Caco-2 (cell line): ENCODE measurements at regions of chr16 and their contacts with region 1.

Region 1: DNA sequence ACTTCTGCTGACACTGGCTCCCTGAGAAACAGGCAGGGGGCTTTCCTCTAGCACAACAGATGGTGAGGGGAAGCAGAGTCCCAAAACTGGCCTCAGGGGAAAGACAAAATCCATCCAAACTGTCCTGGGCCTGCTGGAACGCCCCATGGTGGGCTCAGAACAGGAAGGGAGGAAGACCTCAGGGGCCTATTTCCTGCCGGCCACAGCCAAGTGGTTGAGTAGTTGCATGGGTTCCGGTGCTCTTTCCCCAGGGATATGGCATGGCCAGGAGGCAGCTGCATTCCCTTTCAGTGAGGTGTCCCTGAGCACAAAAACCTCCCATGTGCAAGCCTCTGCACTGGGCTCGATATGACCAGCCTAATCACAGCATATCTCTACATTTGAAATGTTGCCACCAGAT is 303.0 kb upstream of the IRX5 start:
- DNase-seq: no peak
- H3K4me3 ChIP-seq: no peak overlapping the region
- H3K4me3 Mint-ChIP-seq: peak overlapping the region; percentile 13
- H3K27ac Mint-ChIP-seq: peak overlapping the region; percentile 75
- H3K4me1 ChIP-seq: peaks cover 33% of the 10 kb centered on the region
- H3K4me1 Mint-ChIP-seq: peaks cover 42% of the 10 kb centered on the region
- H3K27me3 ChIP-seq: no peaks in the 10 kb centered on the region
- H3K27me3 Mint-ChIP-seq: no peaks in the 10 kb centered on the region
- CTCF ChIP-seq: no peak

Region 2: GRCh38 chr16:53945996-53946395 is 681.6 kb before region 1 on chr16:
- CTCF ChIA-PET with region 1: no interaction called
- POLR2A ChIA-PET with region 1: interaction called, 3 read pairs
- intact Hi-C with region 1: loop called (anchors 5 kb)
- DNase-seq: peak in 1 of 2 experiments; percentile 65
- H3K4me3 ChIP-seq: no peak overlapping the region
- H3K4me3 Mint-ChIP-seq: no peak overlapping the region
- H3K27ac Mint-ChIP-seq: no peak overlapping the region
- H3K4me1 ChIP-seq: peaks cover 14% of the 10 kb centered on the region
- H3K4me1 Mint-ChIP-seq: peaks cover 7% of the 10 kb centered on the region
- H3K27me3 ChIP-seq: no peaks in the 10 kb centered on the region
- H3K27me3 Mint-ChIP-seq: no peaks in the 10 kb centered on the region
- CTCF ChIP-seq: peak; percentile 69 to 87

Region 3: GRCh38 chr16:54286090-54286993 is 341.3 kb before region 1 on chr16 and contains the start of gene IRX3:
- CTCF ChIA-PET with region 1: no interaction called
- POLR2A ChIA-PET with region 1: no interaction called
- intact Hi-C with region 1: loop called (anchors 5 kb)
- DNase-seq: peak; percentile 90 to 95
- H3K4me3 ChIP-seq: peak within 1 kb of the TSS; percentile 83
- H3K4me3 Mint-ChIP-seq: peak within 1 kb of the TSS; percentile 85
- H3K27ac Mint-ChIP-seq: peak within 1 kb of the TSS; percentile 79
- H3K4me1 ChIP-seq: 0 out of 2 replicates have a peak, but pooled peaks cover 5% of the 10 kb centered on the region
- H3K4me1 Mint-ChIP-seq: peaks cover 7% of the 10 kb centered on the region
- H3K27me3 ChIP-seq: no peaks in the 10 kb centered on the region
- H3K27me3 Mint-ChIP-seq: no peaks in the 10 kb centered on the region
- CTCF ChIP-seq: no peak
- total RNA-seq, gene IRX3: 63.2 and 73.3 TPM in 2 replicates

Region 4: GRCh38 chr16:54585094-54585997 is 42.3 kb before region 1 on chr16:
- CTCF ChIA-PET with region 1: no interaction called
- POLR2A ChIA-PET with region 1: no interaction called
- intact Hi-C with region 1: loop called (anchors 5 kb)
- DNase-seq: no peak
- H3K4me3 ChIP-seq: no peak overlapping the region
- H3K4me3 Mint-ChIP-seq: no peak overlapping the region
- H3K27ac Mint-ChIP-seq: no peak overlapping the region
- H3K4me1 ChIP-seq: peaks cover 18% of the 10 kb centered on the region
- H3K4me1 Mint-ChIP-seq: peaks cover 26% of the 10 kb centered on the region
- H3K27me3 ChIP-seq: no peaks in the 10 kb centered on the region
- H3K27me3 Mint-ChIP-seq: no peaks in the 10 kb centered on the region
- CTCF ChIP-seq: no peak

Region 5: GRCh38 chr16:54687043-54687899 is 59.7 kb after region 1 on chr16:
- CTCF ChIA-PET with region 1: no interaction called
- POLR2A ChIA-PET with region 1: no interaction called
- intact Hi-C with region 1: loop called (anchors 1 kb)
- DNase-seq: peak in 1 of 2 experiments; percentile 38
- H3K4me3 ChIP-seq: no peak overlapping the region
- H3K4me3 Mint-ChIP-seq: no peak overlapping the region
- H3K27ac Mint-ChIP-seq: no peak overlapping the region
- H3K4me1 ChIP-seq: peaks cover 18% of the 10 kb centered on the region
- H3K4me1 Mint-ChIP-seq: peaks cover 19% of the 10 kb centered on the region
- H3K27me3 ChIP-seq: no peaks in the 10 kb centered on the region; the same call in 1 of the 2 replicates
- H3K27me3 Mint-ChIP-seq: no peaks in the 10 kb centered on the region
- CTCF ChIP-seq: no peak